Posterior vena cava (tissue), 2 donors: ENCODE measurements at regions of chr10 and their contacts with region 1.

Region 1: GRCh38 chr10:99845837-99846382 is 63.5 kb downstream of the ABCC2 start:
- DNase-seq: peak; percentile 82

Region 2: DNA sequence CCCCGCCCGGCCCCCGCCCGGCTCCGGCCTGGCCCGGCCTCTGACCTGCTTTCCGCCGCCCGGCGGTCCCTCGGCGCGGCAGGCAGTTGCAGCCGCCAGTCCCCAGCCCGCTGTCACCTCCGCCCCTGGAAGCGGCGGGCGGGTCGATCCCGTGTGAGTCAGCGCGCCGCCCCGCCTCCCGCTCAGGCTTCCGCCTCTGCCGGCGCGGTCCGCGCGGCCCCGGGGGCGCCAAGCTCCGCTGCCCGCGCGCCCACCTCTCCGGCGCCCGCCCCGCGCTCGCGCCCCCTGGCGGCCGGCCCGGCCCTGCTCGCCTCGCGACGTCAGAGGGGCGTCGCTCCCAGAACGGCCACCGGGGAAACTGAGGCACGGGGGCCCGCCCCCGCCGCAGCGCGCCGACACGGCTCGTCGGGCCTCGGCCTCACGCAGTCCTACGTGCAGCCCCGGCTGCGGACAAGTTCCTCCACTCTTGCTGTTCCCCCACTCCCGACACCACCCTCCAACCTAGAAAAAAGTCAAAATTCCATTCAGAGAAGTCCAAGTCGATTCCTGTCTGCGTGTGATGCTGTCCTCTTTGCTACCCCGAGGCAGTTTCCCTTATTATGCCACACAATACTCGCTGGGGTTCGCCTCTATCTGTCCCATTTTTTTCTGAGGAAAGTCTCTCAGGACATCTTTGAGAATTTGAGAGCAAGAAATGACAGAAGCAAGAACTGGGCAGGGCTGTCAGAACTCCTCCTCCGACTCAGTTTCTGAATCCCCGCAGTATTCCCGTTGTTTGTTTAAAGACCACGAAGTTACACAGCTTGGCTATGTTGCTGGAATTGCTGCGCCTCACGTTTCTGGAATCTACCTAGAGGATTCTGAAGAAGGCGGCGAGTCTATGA is 164.1 kb after region 1 on chr10 and contains the start of gene DNMBP:
- intact Hi-C with region 1: loop called in 1 of 2 experiments (anchors 5 kb)
- DNase-seq: peak; percentile 95
- total RNA-seq, gene DNMBP: 13.1 to 15.5 TPM

Region 3: DNA sequence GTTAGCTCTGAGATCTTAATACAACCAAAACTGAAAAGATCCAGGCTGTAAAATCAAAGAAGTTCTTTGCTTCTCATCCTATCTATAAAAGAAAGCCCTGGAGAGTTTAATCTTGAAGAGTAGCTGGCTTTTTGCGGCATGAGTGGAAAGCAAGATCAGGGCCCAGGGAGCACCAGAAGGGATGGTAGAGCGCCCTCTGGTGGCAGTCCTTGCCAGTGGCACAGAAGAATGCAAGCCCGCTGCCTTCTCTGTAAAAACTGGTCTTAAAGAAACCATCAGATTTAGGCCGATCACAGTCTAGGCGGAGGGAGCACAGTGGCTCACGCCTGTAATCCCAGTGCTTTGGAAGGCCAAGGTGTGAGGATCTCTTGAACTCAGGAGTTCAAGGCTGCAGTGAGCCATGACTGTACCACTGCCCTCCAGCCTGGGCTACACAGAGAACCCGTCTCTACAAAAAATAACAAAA is 200.1 kb after region 1 on chr10:
- intact Hi-C with region 1: loop called (anchors 2 to 5 kb)
- DNase-seq: peak; percentile 96